Activated CD4-positive, alpha-beta memory T cell treated with anti-CD3 and anti-CD28 coated beads for 36 hours (primary cell): ENCODE measurements at regions of chr2 and their contacts with region 1.

Region 1: DNA sequence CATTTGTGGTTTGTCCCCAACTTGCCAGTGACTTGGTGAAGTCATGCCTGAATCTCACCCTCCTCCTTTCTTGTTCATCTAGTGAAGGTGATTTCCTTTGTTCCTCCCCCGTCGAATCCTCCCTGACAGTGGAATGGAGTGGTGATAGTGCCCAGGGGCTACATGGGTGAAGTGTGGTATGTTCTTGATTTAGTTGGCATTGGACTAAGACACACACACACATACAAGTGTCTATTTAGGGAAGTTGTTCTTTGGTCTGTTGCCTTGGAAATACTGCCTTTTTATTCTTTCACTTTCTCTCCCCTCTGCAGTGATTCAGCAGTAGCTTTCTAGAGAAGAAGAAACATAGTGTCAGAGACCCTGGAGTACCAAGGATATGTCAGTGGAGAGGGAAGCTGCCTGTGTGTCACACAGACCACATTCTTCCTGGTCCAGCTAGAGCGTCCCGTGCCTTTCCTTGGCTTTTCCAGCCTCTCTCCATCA is 10.9 kb downstream of the INPP4A start:
- DNase-seq: peak; percentile 60
- H3K4me3 Mint-ChIP-seq: peak overlapping the region; percentile 55
- H3K27ac Mint-ChIP-seq: peak overlapping the region; percentile 84
- H3K4me1 Mint-ChIP-seq: peaks cover 93% of the 10 kb centered on the region
- H3K27me3 Mint-ChIP-seq: no peaks in the 10 kb centered on the region

Region 2: GRCh38 chr2:98438190-98439133 is 17.1 kb before region 1 on chr2:
- CTCF ChIA-PET with region 1: interaction called, 3 read pairs
- POLR2A ChIA-PET with region 1: no interaction called
- intact Hi-C with region 1: loop called (anchors 1 kb)
- DNase-seq: no peak
- H3K4me3 Mint-ChIP-seq: peak overlapping the region; percentile 8
- H3K27ac Mint-ChIP-seq: peak overlapping the region; percentile 73
- H3K4me1 Mint-ChIP-seq: peaks cover 27% of the 10 kb centered on the region
- H3K27me3 Mint-ChIP-seq: no peaks in the 10 kb centered on the region

Region 3: DNA sequence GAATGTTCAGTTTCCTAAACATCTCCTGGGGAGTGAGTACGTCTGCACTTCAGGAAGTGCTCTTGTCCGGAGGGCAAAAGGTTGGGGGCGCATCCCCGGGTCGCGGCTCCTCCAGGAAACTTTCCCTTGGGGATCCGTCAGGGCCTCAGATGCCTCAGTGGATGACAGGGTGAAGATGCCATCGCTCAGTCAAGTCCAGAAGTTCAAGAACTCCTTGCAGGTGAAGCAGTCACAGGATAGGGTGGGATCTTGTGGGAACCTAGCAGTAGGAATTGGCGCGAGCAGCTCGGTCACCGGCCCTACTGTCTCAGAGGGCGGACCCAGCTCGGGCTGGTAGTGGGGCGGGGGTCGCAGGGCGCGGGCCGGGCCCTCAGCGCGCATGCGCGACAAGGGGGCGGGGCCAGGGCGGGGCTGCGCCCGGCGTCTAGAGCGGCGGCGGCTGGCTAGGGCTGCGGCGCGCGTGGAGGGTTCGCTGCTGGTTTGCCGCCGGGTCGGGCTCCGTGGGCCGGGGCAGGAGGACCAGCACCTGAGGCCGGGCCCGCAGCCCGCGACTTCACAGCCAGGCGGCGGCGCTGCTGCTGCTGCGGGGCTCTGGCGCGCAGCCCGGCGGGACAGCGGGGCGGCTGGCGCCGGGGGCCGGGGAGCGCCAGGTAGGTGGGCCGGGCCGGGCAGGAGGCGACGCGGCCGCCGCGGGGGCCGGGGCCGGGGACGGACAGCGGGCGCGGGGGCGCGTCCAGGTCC is 10.9 kb before region 1 on chr2 and contains the start of gene INPP4A:
- CTCF ChIA-PET with region 1: interaction called, 8 read pairs
- POLR2A ChIA-PET with region 1: interaction called, 22 read pairs
- intact Hi-C with region 1: loop called (anchors 1 kb)
- DNase-seq: peak; percentile 84
- H3K4me3 Mint-ChIP-seq: peak within 1 kb of the TSS; percentile 89
- H3K27ac Mint-ChIP-seq: peak within 1 kb of the TSS; percentile 86
- H3K4me1 Mint-ChIP-seq: peaks cover 43% of the 10 kb centered on the region
- H3K27me3 Mint-ChIP-seq: no peaks in the 10 kb centered on the region
- total RNA-seq, gene INPP4A: 40.7 to 42.0 TPM

Region 4: DNA sequence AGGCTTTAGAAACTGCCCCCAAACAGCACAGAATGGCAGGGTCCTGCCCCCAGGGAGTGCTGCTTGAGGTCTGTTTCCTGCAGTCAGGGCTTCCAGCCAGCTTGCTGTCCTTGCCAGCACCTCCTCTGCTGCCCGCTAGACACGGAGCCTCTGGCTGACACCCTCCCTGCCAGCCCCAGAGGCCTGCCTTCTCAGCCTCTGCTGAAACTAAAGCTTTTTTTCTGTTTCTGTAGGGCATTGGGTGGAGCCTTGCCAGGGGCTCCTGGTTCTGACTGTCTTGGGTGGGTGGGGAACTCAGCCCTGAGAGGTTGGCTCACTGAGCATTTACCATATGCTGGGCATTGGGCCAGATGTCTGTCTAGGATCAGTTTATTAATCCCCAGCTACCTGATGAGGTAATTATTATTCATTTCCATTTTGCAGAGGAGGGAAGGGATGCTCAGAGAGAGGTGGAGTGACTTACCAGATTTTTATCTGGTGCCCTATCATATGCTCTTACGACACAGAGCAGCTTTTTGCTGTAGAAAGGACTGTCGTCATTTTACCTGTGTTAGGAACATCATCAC is 24.5 kb after region 1 on chr2:
- CTCF ChIA-PET with region 1: interaction called, 4 read pairs
- POLR2A ChIA-PET with region 1: interaction called, 3 read pairs
- intact Hi-C with region 1: loop called (anchors 1 kb)
- DNase-seq: peak; percentile 74
- H3K4me3 Mint-ChIP-seq: peak overlapping the region; percentile 21
- H3K27ac Mint-ChIP-seq: peak overlapping the region; percentile 81
- H3K4me1 Mint-ChIP-seq: peaks cover 96% of the 10 kb centered on the region
- H3K27me3 Mint-ChIP-seq: no peaks in the 10 kb centered on the region

Region 5: DNA sequence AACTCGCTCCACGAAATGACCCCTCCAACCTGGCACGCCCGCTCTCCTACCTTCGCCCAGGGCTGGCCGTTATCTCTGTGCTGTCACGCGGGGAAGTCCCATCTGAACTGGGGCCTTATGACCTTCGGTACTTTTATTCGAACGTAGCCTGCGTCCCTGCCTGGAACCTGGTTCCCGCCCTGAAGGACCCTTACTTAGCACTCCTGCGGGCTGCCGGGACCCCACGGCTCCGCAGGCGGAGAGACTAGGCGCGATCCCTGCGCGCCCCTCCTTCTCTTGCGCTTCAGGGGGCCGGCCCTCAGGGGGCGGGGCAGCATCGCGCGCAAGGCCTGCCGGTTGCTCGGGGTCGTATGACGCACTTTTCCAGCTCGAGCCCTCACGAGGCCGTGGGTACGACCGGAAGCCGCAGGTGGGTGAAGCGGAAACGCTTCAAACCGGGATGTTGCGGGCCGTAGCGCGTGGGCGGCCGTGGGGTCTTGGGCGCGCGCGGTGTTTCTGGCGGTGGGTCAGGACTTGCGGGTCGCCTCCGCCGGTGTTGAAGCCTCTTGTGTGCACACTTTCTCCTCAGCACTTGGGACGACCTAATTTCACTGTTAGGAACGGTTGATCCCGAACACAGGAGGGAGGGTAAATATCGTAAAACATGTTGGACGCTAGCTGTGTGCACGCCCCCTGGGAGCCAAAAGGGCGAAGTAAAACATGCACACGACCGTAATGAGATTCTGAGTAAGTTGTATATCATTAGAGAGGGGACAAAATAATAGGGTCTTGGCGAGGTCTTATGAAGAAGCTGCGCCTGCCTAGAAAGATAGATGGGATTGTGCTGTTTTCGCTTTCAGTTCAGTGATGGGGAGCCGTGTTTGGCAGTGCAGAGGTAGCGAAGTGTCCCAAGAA is 699.4 kb after region 1 on chr2 and contains the starts of genes LIPT1 and TSGA10:
- CTCF ChIA-PET with region 1: no interaction called
- POLR2A ChIA-PET with region 1: no interaction called
- intact Hi-C with region 1: loop called (anchors 10 kb)
- DNase-seq: peak; percentile 96
- H3K4me3 Mint-ChIP-seq: no peak within 1 kb of the TSS
- H3K27ac Mint-ChIP-seq: peak within 1 kb of the TSS; percentile 91
- H3K4me1 Mint-ChIP-seq: peaks cover 24% of the 10 kb centered on the region
- H3K27me3 Mint-ChIP-seq: no peaks in the 10 kb centered on the region
- total RNA-seq, gene LIPT1: 3.3 to 4.6 TPM
- total RNA-seq, gene TSGA10: 6.3 to 7.0 TPM